Activated T-helper 1 cell treated with anti-CD3 and anti-CD28 coated beads, Interleukin-12 subunit alpha, Interleukin-12 subunit beta, Interleukin-2, Interleukin-4 antibody, amounts not matched to agents 30 ng/mL and 10 ng/mL and 1 ng/mL, durations not matched to agents 14 hours and 24 hours and 36 hours (primary cell): ENCODE measurements at regions of chr10 and their contacts with region 1.

Region 1: DNA sequence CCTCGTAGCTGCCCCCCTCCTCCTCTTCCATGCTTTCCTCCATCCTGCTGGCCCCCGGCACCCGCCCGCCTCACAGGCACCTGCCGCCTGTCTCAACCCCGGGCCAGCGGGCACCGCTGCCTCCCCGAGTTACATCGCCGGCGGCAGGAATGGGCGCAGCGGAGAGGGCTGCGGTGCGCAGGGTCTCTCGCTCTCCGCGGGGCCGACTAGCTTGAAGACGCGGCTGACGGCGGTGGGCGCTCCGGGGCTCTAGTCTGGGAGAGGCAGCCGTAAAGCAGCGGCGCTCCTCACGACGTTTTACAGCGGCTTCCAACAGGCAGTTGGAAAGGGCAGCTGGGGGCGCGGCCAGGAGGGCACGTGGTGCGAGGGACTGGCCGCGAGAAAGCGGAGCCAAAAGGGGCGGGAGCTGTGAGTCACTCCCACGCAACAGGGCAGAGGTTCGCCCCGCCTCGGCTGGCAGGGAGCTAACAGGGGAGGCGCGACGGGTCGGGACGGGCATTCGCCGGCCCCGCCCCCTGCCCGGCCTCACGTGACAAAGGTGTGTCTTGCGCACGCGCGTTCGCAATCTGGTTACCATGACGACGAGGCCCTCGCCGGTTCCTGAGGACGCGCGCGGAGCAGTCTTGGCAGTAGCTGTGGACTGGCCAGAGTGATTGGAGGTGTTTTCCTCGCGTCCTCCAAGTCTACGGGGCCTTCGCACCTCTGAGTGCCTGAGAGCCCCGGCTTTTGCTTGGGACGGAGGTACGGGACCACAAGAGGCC is at the start of gene CACUL1:
- DNase-seq: peak; percentile 100
- H3K4me3 Mint-ChIP-seq: peak within 1 kb of the TSS; percentile 87
- H3K27ac Mint-ChIP-seq: peak within 1 kb of the TSS; percentile 86
- H3K4me1 Mint-ChIP-seq: peaks cover 26% of the 10 kb centered on the region
- H3K27me3 Mint-ChIP-seq: peaks cover 15% of the 10 kb centered on the region
- total RNA-seq, gene CACUL1: 30.1 and 32.7 TPM in 2 replicates

Region 2: GRCh38 chr10:118046395-118047156 is 708.3 kb before region 1 on chr10 and contains the start of gene RAB11FIP2:
- intact Hi-C with region 1: loop called (anchors 2 kb)
- DNase-seq: peak; percentile 91
- H3K4me3 Mint-ChIP-seq: peak within 1 kb of the TSS; percentile 92
- H3K27ac Mint-ChIP-seq: peak within 1 kb of the TSS; percentile 83
- H3K4me1 Mint-ChIP-seq: peaks cover 30% of the 10 kb centered on the region
- H3K27me3 Mint-ChIP-seq: peaks cover 13% of the 10 kb centered on the region
- total RNA-seq, gene RAB11FIP2: 13.0 and 13.1 TPM in 2 replicates

Region 3: GRCh38 chr10:118712930-118713634 is 41.8 kb before region 1 on chr10:
- intact Hi-C with region 1: no loop called
- DNase-seq: no peak
- H3K4me3 Mint-ChIP-seq: no peak overlapping the region
- H3K27ac Mint-ChIP-seq: no peak overlapping the region
- H3K4me1 Mint-ChIP-seq: peaks cover 31% of the 10 kb centered on the region
- H3K27me3 Mint-ChIP-seq: no peaks in the 10 kb centered on the region

Region 4: DNA sequence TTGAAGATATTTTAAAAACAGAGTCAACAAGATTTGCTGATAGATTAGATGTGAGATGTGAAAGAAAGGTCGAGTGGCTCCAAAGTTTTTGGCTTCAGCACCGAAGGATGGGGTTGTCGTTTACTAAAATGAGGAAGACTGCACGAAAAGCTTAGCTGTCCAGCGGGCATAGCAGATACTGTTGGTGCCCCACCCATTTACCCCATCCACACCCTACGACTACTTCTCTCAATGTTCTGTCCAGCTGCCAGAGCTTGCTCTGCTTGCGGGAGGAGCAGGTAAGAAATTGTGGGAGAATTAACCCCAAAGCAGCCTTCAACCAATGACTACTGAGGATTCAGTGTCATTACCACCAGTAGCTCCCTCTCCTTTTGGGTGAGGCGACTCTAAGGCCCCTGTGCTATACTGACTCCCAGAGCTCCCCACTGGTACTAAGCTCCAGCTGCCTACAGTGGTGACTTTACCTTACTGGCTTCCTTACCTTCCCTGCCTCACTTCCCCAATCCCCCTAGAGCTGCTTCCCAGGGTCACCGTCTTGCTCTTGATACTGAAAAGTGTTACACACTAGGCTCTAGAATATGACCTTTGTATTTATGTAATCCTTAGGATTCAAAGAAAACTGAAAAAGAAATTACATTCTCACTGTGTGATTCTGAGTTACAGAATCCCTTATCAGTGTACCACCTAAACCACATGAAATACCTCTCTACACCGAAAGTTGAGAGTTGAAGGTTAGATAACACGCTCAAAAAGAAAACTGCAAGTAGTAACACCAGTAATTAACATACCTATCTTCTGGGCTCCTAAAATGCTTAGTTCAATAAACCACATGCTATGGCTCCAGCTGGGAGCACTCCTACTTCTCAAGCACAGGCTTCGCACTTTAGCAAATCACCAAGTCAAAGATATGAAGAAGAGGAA is 22.4 kb before region 1 on chr10:
- intact Hi-C with region 1: loop called (anchors 1 kb)
- DNase-seq: no peak
- H3K4me3 Mint-ChIP-seq: peak overlapping the region; percentile 28
- H3K27ac Mint-ChIP-seq: no peak overlapping the region
- H3K4me1 Mint-ChIP-seq: peaks cover 52% of the 10 kb centered on the region
- H3K27me3 Mint-ChIP-seq: no peaks in the 10 kb centered on the region

Region 5: DNA sequence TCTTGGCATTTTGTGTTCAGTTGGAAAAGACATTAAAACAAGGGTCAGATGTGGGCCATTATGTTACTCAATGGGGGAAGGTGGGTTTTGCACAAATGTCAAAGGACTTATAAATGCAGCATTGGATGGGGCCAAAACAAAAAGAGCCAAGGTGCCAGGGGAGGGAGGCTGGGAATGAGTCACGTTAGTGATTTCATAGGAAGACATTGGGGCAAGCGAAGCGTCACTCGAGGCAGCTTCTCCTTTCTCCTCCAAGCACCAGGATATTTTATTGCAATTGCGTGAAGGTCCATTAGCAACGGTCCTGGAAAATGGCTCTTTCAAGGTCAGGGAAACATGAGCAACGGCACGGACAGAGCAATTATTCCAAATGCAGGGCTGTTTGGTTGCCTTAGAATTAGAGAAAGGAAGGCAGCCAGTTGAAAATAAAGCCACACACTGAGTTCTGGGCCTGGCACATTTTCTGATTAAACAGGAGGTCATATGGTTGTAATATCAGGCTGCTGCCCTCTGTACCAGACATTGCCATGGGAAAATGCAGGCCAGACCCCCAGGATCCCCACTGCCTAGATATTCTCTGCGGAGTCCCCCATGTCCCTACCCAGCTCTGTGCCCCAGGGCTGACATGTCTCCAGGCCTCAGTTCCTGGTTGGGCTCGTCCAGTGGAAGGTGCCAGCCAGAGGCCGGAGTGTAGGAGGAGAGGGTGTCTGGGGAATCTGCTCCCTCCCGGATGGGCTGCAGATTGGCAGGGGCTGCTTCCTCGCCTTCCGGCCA is 211.4 kb after region 1 on chr10:
- intact Hi-C with region 1: no loop called
- DNase-seq: no peak
- H3K4me3 Mint-ChIP-seq: no peak overlapping the region
- H3K27ac Mint-ChIP-seq: no peak overlapping the region
- H3K4me1 Mint-ChIP-seq: no peaks in the 10 kb centered on the region
- H3K27me3 Mint-ChIP-seq: peaks cover 3% of the 10 kb centered on the region

Region 6: GRCh38 chr10:119178372-119179119 is 423.6 kb after region 1 on chr10 and contains the start of gene PRDX3:
- intact Hi-C with region 1: loop called (anchors 10 kb)
- DNase-seq: peak; percentile 89
- H3K4me3 Mint-ChIP-seq: peak within 1 kb of the TSS; percentile 100
- H3K27ac Mint-ChIP-seq: peak within 1 kb of the TSS; percentile 100
- H3K4me1 Mint-ChIP-seq: peaks cover 30% of the 10 kb centered on the region
- H3K27me3 Mint-ChIP-seq: no peaks in the 10 kb centered on the region
- total RNA-seq, gene PRDX3: 158 and 163 TPM in 2 replicates

Region 7: DNA sequence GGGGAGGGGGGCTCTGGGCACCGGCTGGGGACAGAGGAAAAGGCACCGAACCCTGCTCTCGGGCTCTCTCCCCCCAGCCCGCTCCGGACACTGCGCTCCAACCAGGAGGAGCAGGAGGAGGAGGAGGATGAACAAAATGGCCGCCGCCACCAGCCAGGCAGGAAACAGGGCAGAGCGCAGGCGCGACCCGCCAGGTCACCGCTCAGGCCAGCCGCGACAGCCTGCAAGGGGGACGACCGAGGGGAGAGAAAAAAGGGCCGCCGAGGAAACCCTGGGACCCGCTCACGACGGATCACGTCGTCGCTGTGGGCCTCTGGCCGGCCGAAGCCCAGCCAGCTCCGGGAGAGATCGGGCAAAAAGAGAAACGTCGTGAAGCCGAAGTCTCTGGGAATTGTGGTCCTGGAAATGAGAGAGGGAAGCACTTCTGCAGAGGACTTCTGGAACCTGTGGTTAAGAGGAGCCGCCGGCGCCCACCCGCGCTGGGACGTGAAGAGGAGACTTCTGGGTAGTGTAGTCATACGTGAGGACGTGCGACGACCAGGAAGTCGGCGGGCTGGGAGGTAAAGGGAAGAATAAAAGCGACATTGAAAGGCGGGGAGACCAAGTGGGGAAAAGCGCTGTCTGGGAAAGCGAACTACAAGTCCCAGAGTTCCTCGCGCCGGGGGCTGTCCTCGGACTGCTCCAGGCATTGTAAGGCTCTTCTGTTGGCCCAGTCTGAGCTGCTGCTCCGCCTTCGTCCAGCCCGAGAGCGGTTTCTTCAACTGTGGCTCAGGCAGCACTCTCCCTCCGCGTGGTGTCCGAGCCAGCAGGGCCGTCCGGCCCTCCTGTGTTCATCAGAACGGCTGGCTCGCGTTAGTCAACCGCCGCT is 841.9 kb after region 1 on chr10 and contains the start of gene TIAL1:
- intact Hi-C with region 1: loop called (anchors 1 kb)
- DNase-seq: peak; percentile 92
- H3K4me3 Mint-ChIP-seq: peak within 1 kb of the TSS; percentile 91
- H3K27ac Mint-ChIP-seq: peak within 1 kb of the TSS; percentile 98
- H3K4me1 Mint-ChIP-seq: peaks cover 51% of the 10 kb centered on the region
- H3K27me3 Mint-ChIP-seq: no peaks in the 10 kb centered on the region
- total RNA-seq, gene TIAL1: 192 and 195 TPM in 2 replicates